ENCODE measurements at regions of chrX and their contacts with region 1.

Region 1: GRCh38 chrX:153333768-153334645 is at the start of gene ZNF275:
- DNase-seq: peak; percentile 95
- H3K4me3 Mint-ChIP-seq: peak within 1 kb of the TSS; percentile 83
- H3K27ac Mint-ChIP-seq: peak within 1 kb of the TSS; percentile 92
- H3K4me1 Mint-ChIP-seq: peaks cover 39% of the 10 kb centered on the region
- H3K27me3 Mint-ChIP-seq: peaks cover 3% of the 10 kb centered on the region
- total RNA-seq, gene ZNF275: 20.1 and 22.1 TPM in 2 replicates

Region 2: GRCh38 chrX:153374426-153374825 is 40.4 kb after region 1 on chrX:
- intact Hi-C with region 1: loop called (anchors 5 kb)
- DNase-seq: no peak
- H3K4me3 Mint-ChIP-seq: no peak overlapping the region
- H3K27ac Mint-ChIP-seq: no peak overlapping the region
- H3K4me1 Mint-ChIP-seq: peaks cover 3% of the 10 kb centered on the region
- H3K27me3 Mint-ChIP-seq: peaks cover 2% of the 10 kb centered on the region

Region 3: DNA sequence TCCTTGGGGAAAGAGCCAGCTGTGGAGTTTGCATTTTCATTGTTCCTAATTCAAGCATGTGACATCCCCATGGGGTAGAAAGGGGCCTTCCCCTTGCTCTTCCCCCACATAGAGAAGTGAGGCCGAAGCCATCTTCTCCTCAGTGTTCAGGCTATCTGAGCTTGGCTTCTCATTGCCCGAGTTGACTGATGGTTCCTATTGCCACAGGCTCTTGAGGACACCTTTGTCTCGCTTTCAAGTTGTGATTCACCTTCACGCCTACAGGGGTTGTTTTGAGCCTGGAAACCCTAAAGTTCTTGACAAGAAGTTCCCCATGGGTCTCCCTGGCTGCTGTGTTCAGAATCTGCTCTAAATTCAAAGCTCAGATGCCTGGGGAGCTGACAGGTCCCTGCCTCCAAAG is 240.0 kb after region 1 on chrX:
- intact Hi-C with region 1: no loop called
- DNase-seq: peak; percentile 55
- H3K4me3 Mint-ChIP-seq: no peak overlapping the region
- H3K27ac Mint-ChIP-seq: no peak overlapping the region
- H3K4me1 Mint-ChIP-seq: peaks cover 4% of the 10 kb centered on the region
- H3K27me3 Mint-ChIP-seq: no peaks in the 10 kb centered on the region